ENCODE measurements at regions of chr6 and their contacts with region 1.

Region 1: GRCh38 chr6:715709-716491 is 23.0 kb upstream of the EXOC2 start:
- DNase-seq: no peak
- H3K4me3 ChIP-seq: no peak overlapping the region
- H3K27ac ChIP-seq: peak overlapping the region; percentile 38 to 55 (median 40)
- H3K4me1 ChIP-seq: peaks cover 0 to 11% (median 6%) of the 10 kb centered on the region in 4 donors
- H3K27me3 ChIP-seq: no peaks in the 10 kb centered on the region
- CTCF ChIP-seq: no peak
- EP300 ChIP-seq: no peak
- POLR2A ChIP-seq: no peak

Region 2: DNA sequence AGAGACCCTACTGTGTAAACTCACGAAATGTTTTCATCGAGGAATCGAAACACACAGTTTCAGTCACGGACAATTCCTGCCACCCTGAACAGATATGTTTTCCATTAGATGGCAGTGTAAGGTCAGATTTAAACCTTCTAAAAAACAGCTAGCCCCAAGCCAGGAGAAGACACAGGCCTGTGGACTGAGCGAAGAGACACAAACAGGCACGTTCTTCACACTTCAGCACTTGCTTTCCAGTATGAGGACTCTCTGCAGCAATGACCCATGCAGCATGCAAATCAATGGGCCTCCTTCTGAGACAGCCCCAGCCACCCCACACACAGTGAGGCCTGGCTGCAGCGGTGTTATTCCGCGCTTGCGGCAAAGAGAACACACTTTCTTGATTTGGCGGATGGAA is 90.9 kb before region 1 on chr6:
- intact Hi-C with region 1: loop called (anchors 5 kb)
- DNase-seq: peak; percentile 69
- H3K4me3 ChIP-seq: peak overlapping the region in 1 of 4 donors; percentile 5
- H3K27ac ChIP-seq: peak overlapping the region; percentile 61 to 75 (median 67)
- H3K4me1 ChIP-seq: peaks cover 0 to 24% (median 4%) of the 10 kb centered on the region in 4 donors
- H3K27me3 ChIP-seq: no peaks in the 10 kb centered on the region
- CTCF ChIP-seq: peak in 2 of 4 experiments; percentile 11 to 29
- EP300 ChIP-seq: no peak
- POLR2A ChIP-seq: no peak

Region 3: DNA sequence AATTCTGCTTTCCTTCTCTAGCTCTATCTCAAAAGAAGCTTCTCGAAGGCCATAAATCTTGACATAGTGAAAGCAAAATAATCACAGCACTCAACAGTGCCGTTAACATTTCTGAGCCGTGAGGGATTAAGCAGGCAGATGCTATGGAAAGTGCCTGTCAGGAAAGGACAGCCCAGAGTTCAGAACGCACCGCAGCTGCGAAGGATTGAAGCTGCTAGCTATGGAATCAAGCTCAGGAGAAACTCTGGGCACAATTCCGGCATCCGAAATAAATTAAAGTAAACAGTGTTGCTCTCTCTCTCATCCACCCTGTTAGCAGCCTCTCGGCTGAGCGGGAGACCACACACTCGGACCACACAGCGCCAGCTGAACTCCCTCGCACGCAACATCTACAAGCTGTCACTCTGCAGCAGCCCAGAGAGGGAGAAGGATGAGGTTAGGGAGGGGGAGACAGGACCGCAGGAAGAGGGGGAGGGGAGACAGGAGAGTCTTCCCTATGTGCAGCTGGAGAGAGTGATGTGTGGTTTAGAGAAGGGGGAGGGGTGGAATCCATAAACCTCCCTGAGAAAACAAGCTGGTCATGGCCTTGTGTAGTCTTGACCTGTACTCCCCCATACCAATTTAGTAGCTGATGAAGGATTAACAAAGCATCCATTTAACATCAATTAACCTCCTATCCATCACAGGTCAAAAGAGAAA is 32.0 kb before region 1 on chr6:
- intact Hi-C with region 1: loop called (anchors 5 kb)
- DNase-seq: no peak
- H3K4me3 ChIP-seq: peak overlapping the region; percentile 14 to 40 (median 28)
- H3K27ac ChIP-seq: peak overlapping the region; percentile 72 to 78 (median 74)
- H3K4me1 ChIP-seq: peaks cover 0 to 52% (median 31%) of the 10 kb centered on the region in 4 donors
- H3K27me3 ChIP-seq: no peaks in the 10 kb centered on the region
- CTCF ChIP-seq: no peak
- EP300 ChIP-seq: no peak
- POLR2A ChIP-seq: no peak

Region 4: GRCh38 chr6:747028-747427 is 31.1 kb after region 1 on chr6:
- intact Hi-C with region 1: no loop called
- DNase-seq: no peak
- H3K4me3 ChIP-seq: no peak overlapping the region
- H3K27ac ChIP-seq: no peak overlapping the region
- H3K4me1 ChIP-seq: no peaks in the 10 kb centered on the region
- H3K27me3 ChIP-seq: no peaks in the 10 kb centered on the region
- CTCF ChIP-seq: no peak
- EP300 ChIP-seq: no peak
- POLR2A ChIP-seq: no peak

Measured in sigmoid colon (tissue), 7 donors.